ENCODE measurements at regions of chr12 and their contacts with region 1.

Region 1: GRCh38 chr12:4276524-4277204 is 3.1 kb downstream of the CCND2 start:
- DNase-seq: peak; percentile 61
- ATAC-seq: peak; percentile 40
- H3K4me3 Mint-ChIP-seq: peak overlapping the region; percentile 91
- H3K27ac Mint-ChIP-seq: peak overlapping the region; percentile 26
- H3K4me1 Mint-ChIP-seq: peaks cover 34% of the 10 kb centered on the region
- H3K27me3 Mint-ChIP-seq: no peaks in the 10 kb centered on the region
- CTCF ChIP-seq: peak; percentile 48

Region 2: DNA sequence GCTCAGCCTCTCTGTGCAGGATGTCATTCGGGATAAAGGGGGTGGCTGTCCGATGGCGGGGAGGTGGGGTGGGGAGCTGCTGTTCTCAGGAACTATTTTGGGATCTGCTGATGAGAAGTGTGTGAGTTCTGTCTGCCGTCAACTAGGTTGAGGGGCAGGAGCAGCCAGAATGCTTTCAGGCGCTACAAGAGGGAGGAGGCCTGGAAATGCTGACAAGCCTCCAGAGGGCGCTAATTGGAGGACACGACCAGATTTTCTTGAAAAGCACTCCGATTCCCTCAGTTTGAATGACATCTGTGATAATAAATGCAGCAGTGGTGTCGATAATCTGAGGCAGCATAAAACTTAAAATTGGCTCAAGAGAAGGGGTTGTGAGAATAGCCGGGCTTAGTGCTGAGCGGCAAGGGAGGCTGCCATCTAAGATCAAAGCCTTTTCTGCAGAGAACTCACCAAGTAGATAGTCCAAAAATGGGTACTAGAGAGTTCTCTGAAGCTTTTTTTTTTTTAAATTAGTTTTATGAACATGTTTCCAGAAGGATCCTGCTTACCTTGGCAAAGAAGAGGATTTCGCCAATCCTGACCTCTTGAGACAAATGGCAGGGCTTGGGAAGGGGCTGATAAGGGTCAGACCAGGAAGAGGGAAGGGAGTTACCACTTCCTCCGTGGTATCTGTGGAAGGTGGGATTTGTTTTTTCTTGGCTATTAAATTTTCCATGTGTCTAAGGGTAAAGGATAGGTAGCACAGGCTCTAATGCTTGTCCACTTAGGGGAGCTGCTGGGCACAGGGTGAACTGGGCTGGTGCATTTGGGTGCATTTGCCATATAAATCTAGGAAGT is 618.1 kb before region 1 on chr12:
- CTCF ChIA-PET with region 1: no interaction called
- POLR2A ChIA-PET with region 1: no interaction called
- intact Hi-C with region 1: loop called (anchors 5 kb)
- DNase-seq: no peak
- ATAC-seq: no peak
- H3K4me3 Mint-ChIP-seq: no peak overlapping the region
- H3K27ac Mint-ChIP-seq: no peak overlapping the region
- H3K4me1 Mint-ChIP-seq: no peaks in the 10 kb centered on the region
- H3K27me3 Mint-ChIP-seq: no peaks in the 10 kb centered on the region
- CTCF ChIP-seq: no peak

Region 3: GRCh38 chr12:3885277-3886094 is 391.2 kb before region 1 on chr12:
- CTCF ChIA-PET with region 1: interaction called, 201 read pairs
- POLR2A ChIA-PET with region 1: interaction called, 12 read pairs
- intact Hi-C with region 1: loop called (anchors 1 kb)
- DNase-seq: no peak
- ATAC-seq: peak; percentile 42
- H3K4me3 Mint-ChIP-seq: no peak overlapping the region
- H3K27ac Mint-ChIP-seq: no peak overlapping the region
- H3K4me1 Mint-ChIP-seq: peaks cover 4% of the 10 kb centered on the region
- H3K27me3 Mint-ChIP-seq: peaks cover 10% of the 10 kb centered on the region
- CTCF ChIP-seq: peak; percentile 26

Region 4: GRCh38 chr12:4037747-4038312 is 238.8 kb before region 1 on chr12:
- CTCF ChIA-PET with region 1: interaction called, 12 read pairs
- POLR2A ChIA-PET with region 1: no interaction called
- intact Hi-C with region 1: no loop called
- DNase-seq: no peak
- ATAC-seq: no peak
- H3K4me3 Mint-ChIP-seq: no peak overlapping the region
- H3K27ac Mint-ChIP-seq: no peak overlapping the region
- H3K4me1 Mint-ChIP-seq: no peaks in the 10 kb centered on the region
- H3K27me3 Mint-ChIP-seq: peaks cover 8% of the 10 kb centered on the region
- CTCF ChIP-seq: no peak

Region 5: DNA sequence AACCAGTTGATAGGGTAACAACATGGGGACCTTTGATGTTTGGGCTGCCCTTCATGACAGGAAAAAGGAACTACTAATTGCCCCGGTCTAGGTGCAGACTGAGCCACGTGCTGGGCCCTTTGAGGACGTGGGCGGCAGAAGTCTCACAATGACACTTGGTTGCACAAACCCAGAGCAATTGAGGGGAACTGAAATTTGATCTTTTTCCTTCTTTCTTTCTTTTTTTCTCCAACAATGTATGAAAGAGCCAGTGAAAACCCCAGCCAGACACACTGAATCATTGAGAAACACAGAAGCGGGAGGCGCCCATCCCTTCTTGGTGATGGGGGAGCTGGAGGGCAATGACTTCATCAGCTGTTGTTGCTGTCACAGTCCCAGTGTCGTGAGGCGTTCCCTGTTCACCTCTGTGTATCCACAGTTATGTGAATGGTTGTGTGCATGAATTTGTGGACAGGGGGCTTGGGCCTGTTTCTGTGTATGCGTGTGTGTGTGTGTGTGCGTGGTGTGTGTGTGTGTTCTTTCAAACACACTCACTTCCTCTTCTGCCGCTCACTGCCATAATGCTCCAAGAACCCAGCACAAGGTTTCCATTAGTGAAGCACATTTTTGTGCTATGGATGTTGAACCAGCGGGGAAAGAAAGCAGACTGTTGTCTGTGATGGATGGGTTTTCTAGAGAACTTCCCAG is 140.6 kb before region 1 on chr12:
- CTCF ChIA-PET with region 1: interaction called, 6 read pairs
- POLR2A ChIA-PET with region 1: interaction called, 55 read pairs
- intact Hi-C with region 1: no loop called
- DNase-seq: peak; percentile 46
- ATAC-seq: peak; percentile 83
- H3K4me3 Mint-ChIP-seq: peak overlapping the region; percentile 47
- H3K27ac Mint-ChIP-seq: peak overlapping the region; percentile 93
- H3K4me1 Mint-ChIP-seq: peaks cover 54% of the 10 kb centered on the region
- H3K27me3 Mint-ChIP-seq: no peaks in the 10 kb centered on the region
- CTCF ChIP-seq: no peak

Region 6: GRCh38 chr12:4215229-4216186 is 61.2 kb before region 1 on chr12:
- CTCF ChIA-PET with region 1: interaction called, 10 read pairs
- POLR2A ChIA-PET with region 1: interaction called, 189 read pairs
- intact Hi-C with region 1: no loop called
- DNase-seq: peak; percentile 60
- ATAC-seq: peak; percentile 83
- H3K4me3 Mint-ChIP-seq: peak overlapping the region; percentile 80
- H3K27ac Mint-ChIP-seq: peak overlapping the region; percentile 93
- H3K4me1 Mint-ChIP-seq: peaks cover 49% of the 10 kb centered on the region
- H3K27me3 Mint-ChIP-seq: no peaks in the 10 kb centered on the region
- CTCF ChIP-seq: no peak

Region 7: GRCh38 chr12:4421590-4422031 is 144.9 kb after region 1 on chr12:
- CTCF ChIA-PET with region 1: no interaction called
- POLR2A ChIA-PET with region 1: no interaction called
- intact Hi-C with region 1: no loop called
- DNase-seq: no peak
- ATAC-seq: peak; percentile 31
- H3K4me3 Mint-ChIP-seq: no peak overlapping the region
- H3K27ac Mint-ChIP-seq: no peak overlapping the region
- H3K4me1 Mint-ChIP-seq: no peaks in the 10 kb centered on the region
- H3K27me3 Mint-ChIP-seq: peaks cover 5% of the 10 kb centered on the region
- CTCF ChIP-seq: no peak